Heart left ventricle (tissue), 16 donors: ENCODE measurements at regions of chr19 and their contacts with region 1.

Region 1: GRCh38 chr19:32041681-32042292 is 303.6 kb upstream of the ZNF507 start:
- DNase-seq: peak in 4 of 5 donors; percentile 23 to 47 (median 34)
- ATAC-seq: peak in 1 of 4 donors; percentile 34
- H3K4me3 ChIP-seq: peak overlapping the region in 10 of 12 donors; percentile 12 to 54 (median 38)
- H3K27ac ChIP-seq: no peak overlapping the region
- H3K4me1 ChIP-seq: peaks cover 0 to 6% (median 0%) of the 10 kb centered on the region in 12 donors
- H3K27me3 ChIP-seq: peaks cover 0 to 58% (median 7%) of the 10 kb centered on the region in 9 donors
- CTCF ChIP-seq: peak; percentile 48 to 89 (median 70)
- POLR2A ChIP-seq: no peak

Region 2: GRCh38 chr19:30669329-30670010 is 1372.3 kb before region 1 on chr19:
- intact Hi-C with region 1: loop called in 1 of 10 experiments (anchors 10 kb)
- DNase-seq: peak; percentile 30 to 84 (median 57)
- ATAC-seq: peak in 3 of 4 donors; percentile 12 to 26 (median 21)
- H3K4me3 ChIP-seq: no peak overlapping the region
- H3K27ac ChIP-seq: no peak overlapping the region
- H3K4me1 ChIP-seq: peaks cover 0 to 25% (median 6%) of the 10 kb centered on the region in 12 donors
- H3K27me3 ChIP-seq: peaks cover 0 to 36% (median 11%) of the 10 kb centered on the region in 9 donors
- CTCF ChIP-seq: peak; percentile 61 to 85 (median 81)
- POLR2A ChIP-seq: no peak

Region 3: DNA sequence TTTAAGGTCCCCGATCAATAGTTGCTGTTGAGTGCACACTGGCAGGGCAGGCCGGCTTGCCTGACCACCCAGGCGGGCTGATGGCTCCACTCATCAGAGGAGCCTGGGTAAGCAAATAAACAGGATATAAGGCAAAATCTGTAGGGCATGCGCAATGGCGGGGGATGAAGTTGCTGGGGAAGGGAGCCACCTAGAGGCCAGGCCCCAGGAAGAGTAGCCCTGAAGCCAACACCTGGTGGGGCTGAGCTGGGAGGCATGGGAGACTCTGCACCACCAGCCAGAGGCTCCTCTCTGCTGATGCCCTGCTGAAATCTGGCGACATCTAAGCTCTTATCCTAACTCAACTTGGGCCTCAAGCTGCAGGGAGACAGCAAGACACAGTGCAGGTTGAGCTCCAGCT is 1345.3 kb before region 1 on chr19:
- intact Hi-C with region 1: loop called in 1 of 10 experiments (anchors 10 kb)
- DNase-seq: peak in 1 of 5 donors; percentile 30
- ATAC-seq: peak in 2 of 4 donors; percentile 38 to 55
- H3K4me3 ChIP-seq: no peak overlapping the region
- H3K27ac ChIP-seq: no peak overlapping the region
- H3K4me1 ChIP-seq: peaks cover 0 to 14% (median 0%) of the 10 kb centered on the region in 12 donors
- H3K27me3 ChIP-seq: peaks cover 0 to 14% (median 7%) of the 10 kb centered on the region in 9 donors
- CTCF ChIP-seq: peak in 10 of 12 donors; percentile 20 to 51 (median 27)
- POLR2A ChIP-seq: no peak

Region 4: GRCh38 chr19:31676271-31677004 is 365.3 kb before region 1 on chr19:
- intact Hi-C with region 1: loop called in 7 of 10 experiments (anchors 2 to 10 kb)
- DNase-seq: no peak
- ATAC-seq: peak in 1 of 4 donors; percentile 29
- H3K4me3 ChIP-seq: no peak overlapping the region
- H3K27ac ChIP-seq: no peak overlapping the region
- H3K4me1 ChIP-seq: no peaks in the 10 kb centered on the region
- H3K27me3 ChIP-seq: no peaks in the 10 kb centered on the region
- CTCF ChIP-seq: peak in 7 of 12 donors; percentile 16 to 39 (median 31)
- POLR2A ChIP-seq: no peak

Region 5: GRCh38 chr19:31991984-31992655 is 49.7 kb before region 1 on chr19:
- intact Hi-C with region 1: no loop called
- DNase-seq: peak in 1 of 5 donors; percentile 38
- ATAC-seq: no peak
- H3K4me3 ChIP-seq: no peak overlapping the region
- H3K27ac ChIP-seq: no peak overlapping the region
- H3K4me1 ChIP-seq: no peaks in the 10 kb centered on the region
- H3K27me3 ChIP-seq: peaks cover 0 to 3% (median 0%) of the 10 kb centered on the region in 9 donors
- CTCF ChIP-seq: no peak
- POLR2A ChIP-seq: no peak

Region 6: DNA sequence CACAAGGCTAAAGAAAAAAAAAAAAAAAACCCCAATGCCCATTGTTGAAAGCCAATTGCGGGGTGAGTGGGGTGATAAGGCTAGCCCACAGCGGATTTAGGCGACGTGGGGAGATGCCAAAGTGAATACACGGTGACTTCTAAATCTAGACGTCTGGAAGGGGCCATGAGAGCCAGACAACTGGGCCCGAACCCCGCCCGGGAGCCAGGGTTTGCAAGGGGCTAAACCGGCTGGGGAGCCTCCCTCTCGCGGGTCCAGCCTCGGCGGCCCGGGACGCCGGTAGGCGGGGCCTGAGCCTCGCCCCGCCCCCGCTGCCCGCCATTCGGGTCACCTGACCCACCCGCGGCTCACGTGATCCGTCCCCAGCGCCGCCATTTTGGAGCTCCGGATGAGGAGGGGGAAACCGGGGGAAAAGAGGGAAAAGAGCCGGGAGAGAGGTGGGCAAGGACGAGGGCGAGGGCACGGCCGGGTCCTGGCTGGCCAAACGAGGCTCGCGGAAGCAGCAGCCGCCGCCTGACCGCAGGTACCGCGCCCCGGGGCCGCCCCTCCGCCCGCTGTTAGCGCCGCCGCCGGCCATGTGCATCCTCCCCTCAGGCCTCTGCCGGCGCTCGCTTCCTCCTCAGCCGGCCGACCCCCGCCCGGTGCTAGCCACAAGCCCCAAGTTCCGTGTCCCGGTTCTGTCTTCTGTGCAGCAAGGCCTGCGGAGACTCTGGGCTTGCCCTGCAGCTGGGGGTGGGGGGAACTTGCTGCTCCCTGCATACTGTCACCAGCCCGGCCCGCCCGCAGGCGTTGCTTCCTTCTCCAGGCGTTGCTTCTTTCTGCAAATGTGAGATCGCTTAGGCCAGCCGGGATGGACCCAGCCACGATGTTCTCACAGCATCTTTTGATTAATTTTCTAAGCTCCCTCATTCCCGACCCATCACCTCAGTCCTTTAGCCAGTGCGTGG is 303.7 kb after region 1 on chr19 and contains the start of gene ZNF507:
- intact Hi-C with region 1: no loop called
- DNase-seq: peak; percentile 83 to 89 (median 86)
- ATAC-seq: peak; percentile 77 to 98 (median 96)
- H3K4me3 ChIP-seq: peak within 1 kb of the TSS; percentile 73 to 93 (median 82)
- H3K27ac ChIP-seq: peak within 1 kb of the TSS; percentile 43 to 89 (median 75)
- H3K4me1 ChIP-seq: peaks cover 0 to 41% (median 29%) of the 10 kb centered on the region in 12 donors
- H3K27me3 ChIP-seq: peaks cover 0 to 73% (median 0%) of the 10 kb centered on the region in 9 donors
- CTCF ChIP-seq: peak in 3 of 12 donors; percentile 4 to 24 (median 19)
- POLR2A ChIP-seq: no peak
- total RNA-seq, gene ZNF507: 9.1 to 27.3 (median 17.3) TPM